Activated CD4-positive, alpha-beta T cell treated with anti-CD3 and anti-CD28 coated beads for 36 hours (primary cell): ENCODE measurements at regions of chr7 and their contacts with region 1.

Region 1: DNA sequence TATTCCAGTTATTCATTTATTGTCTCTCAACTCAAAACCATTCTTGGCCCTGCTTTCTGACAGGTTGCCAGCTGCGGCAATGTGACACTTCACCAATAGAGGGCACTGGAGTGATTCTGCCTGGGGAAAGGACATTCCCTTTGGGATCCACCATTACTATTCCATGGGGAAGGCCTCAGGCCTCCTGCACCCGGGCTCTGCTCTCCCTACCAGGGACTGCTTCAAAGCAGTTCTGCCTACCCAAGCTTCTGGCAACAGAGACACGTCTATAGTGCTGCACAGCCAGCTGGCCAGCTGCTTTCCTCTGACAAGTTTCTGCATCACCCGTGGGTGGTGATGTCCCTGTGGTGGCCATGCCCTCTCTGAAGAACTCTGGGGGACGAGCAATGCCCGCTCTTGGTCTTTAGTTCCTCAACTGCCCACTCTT is 163.8 kb downstream of the ELMO1 start:
- DNase-seq: peak; percentile 62
- ATAC-seq: peak; percentile 33
- H3K4me3 Mint-ChIP-seq: no peak overlapping the region
- H3K27ac Mint-ChIP-seq: peak overlapping the region; percentile 8
- H3K4me1 Mint-ChIP-seq: peaks cover 47% of the 10 kb centered on the region
- H3K27me3 Mint-ChIP-seq: no peaks in the 10 kb centered on the region

Region 2: GRCh38 chr7:37297546-37297945 is 12.7 kb after region 1 on chr7:
- CTCF ChIA-PET with region 1: interaction called, 10 read pairs
- POLR2A ChIA-PET with region 1: no interaction called
- intact Hi-C with region 1: no loop called
- DNase-seq: no peak
- ATAC-seq: peak; percentile 51
- H3K4me3 Mint-ChIP-seq: no peak overlapping the region
- H3K27ac Mint-ChIP-seq: peak overlapping the region; percentile 51
- H3K4me1 Mint-ChIP-seq: peaks cover 24% of the 10 kb centered on the region
- H3K27me3 Mint-ChIP-seq: no peaks in the 10 kb centered on the region

Region 3: GRCh38 chr7:37342688-37343471 is 58.1 kb after region 1 on chr7:
- CTCF ChIA-PET with region 1: interaction called, 5 read pairs
- POLR2A ChIA-PET with region 1: no interaction called
- intact Hi-C with region 1: loop called (anchors 2 kb)
- DNase-seq: peak; percentile 85
- ATAC-seq: peak; percentile 83
- H3K4me3 Mint-ChIP-seq: peak overlapping the region; percentile 89
- H3K27ac Mint-ChIP-seq: peak overlapping the region; percentile 95
- H3K4me1 Mint-ChIP-seq: peaks cover 77% of the 10 kb centered on the region
- H3K27me3 Mint-ChIP-seq: no peaks in the 10 kb centered on the region

Region 4: GRCh38 chr7:37376386-37376785 is 91.6 kb after region 1 on chr7:
- CTCF ChIA-PET with region 1: no interaction called
- POLR2A ChIA-PET with region 1: no interaction called
- intact Hi-C with region 1: no loop called
- DNase-seq: peak; percentile 75
- ATAC-seq: peak; percentile 82
- H3K4me3 Mint-ChIP-seq: peak overlapping the region; percentile 9
- H3K27ac Mint-ChIP-seq: peak overlapping the region; percentile 82
- H3K4me1 Mint-ChIP-seq: peaks cover 71% of the 10 kb centered on the region
- H3K27me3 Mint-ChIP-seq: no peaks in the 10 kb centered on the region

Region 5: DNA sequence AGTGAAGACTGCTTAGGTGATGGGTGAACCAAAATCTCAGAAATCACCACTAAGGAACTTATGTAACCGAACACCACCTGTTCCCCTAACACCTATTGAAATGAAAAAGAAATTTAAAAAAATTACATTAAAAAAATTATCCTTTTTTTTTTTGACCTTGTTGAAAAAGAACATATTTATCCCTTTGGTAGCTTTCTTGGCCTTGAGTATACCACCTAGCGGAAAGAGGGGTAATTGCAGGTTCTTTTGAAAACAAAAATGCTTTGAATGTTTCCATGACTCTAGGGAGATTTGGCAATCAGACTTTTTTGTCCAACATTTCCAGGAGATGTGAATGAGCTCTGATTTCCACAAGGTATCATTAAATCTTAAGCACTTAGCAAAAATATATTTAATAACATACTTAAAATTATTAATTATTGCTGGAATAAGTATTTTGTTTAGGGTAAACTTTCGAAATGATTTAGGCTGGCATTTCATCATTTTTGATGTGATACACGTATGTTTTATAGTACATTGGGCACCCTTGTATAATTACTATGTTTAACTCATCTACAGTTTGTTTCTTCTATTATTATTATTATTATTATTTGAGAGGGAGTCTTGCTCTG is 210.9 kb after region 1 on chr7:
- CTCF ChIA-PET with region 1: interaction called, 7 read pairs
- POLR2A ChIA-PET with region 1: no interaction called
- intact Hi-C with region 1: loop called in 1 of 2 experiments (anchors 5 kb)
- DNase-seq: no peak
- ATAC-seq: no peak
- H3K4me3 Mint-ChIP-seq: no peak overlapping the region
- H3K27ac Mint-ChIP-seq: no peak overlapping the region
- H3K4me1 Mint-ChIP-seq: peaks cover 8% of the 10 kb centered on the region
- H3K27me3 Mint-ChIP-seq: no peaks in the 10 kb centered on the region